G401 (cell line): ENCODE measurements at regions of chr14 and their contacts with region 1.

Region 1: DNA sequence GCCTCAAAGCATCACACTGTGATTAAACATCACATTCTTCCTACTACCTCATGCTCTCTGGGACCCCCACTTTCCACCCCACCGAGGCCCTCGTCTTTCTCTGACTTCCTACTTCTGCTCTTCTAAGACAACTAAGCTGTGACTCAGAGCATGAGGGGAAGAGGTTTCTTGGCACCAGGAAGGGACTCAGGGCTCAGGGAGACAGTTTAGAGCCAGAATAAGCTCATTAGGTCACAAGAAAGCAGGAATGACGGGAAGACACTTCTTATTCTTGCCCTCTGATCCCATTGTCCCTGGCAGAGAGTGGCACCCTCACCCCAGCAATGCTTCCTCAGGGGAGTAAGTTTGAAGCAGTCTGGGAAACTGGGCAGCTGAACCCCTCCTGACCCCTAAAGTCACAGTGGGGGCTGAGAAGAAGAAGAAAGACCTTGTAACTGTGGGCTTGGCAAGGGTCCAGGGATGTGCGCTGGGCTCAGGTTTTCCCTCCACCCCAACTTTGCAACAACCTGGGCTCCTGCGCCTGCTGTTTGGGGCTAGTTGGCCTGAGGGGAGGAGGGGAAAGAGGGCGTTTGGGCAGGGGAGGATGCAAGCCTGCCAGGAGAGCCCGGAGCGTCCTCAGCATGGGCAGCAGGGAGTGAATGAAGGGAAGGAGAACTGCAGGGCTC is 64.6 kb upstream of the ACTN1 start:
- DNase-seq: no peak

Region 2: DNA sequence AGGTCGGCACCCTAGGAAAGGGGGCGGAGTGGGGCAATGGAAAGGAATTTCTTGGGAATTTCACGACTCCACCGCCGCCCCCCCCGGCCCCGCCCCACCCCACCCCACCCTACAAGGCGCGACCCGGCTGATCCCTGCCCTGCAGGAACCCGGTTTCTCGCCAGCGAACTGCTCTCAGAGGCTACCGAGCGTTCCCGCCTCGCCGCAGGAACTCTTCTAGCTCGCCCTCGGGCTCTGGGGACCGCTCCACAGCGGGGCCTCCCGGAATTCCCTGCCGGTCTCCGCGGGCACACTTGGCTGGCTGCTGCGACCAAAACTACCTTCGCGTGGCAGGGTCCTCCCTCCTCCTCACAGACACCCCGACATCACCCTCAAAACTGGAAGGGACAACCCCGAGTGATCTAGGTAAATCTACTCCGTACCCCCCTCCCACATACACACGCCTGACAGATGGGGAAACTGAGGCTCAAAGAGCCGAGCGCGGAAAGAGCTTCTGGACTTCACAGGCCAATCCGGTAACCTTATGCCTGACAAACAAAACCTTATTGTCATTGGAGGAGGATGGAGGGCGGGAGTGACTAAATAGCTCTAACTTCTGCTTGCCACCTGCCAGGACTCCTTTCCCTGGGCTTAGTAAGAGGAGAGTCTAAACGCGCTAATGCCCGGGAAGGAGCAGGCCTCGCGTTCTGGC is 63.8 kb before region 1 on chr14:
- in situ Hi-C with region 1: loop called (anchors 10 kb)
- DNase-seq: peak; percentile 43